A673 (cell line): ENCODE measurements at regions of chr6 and their contacts with region 1.

Region 1: DNA sequence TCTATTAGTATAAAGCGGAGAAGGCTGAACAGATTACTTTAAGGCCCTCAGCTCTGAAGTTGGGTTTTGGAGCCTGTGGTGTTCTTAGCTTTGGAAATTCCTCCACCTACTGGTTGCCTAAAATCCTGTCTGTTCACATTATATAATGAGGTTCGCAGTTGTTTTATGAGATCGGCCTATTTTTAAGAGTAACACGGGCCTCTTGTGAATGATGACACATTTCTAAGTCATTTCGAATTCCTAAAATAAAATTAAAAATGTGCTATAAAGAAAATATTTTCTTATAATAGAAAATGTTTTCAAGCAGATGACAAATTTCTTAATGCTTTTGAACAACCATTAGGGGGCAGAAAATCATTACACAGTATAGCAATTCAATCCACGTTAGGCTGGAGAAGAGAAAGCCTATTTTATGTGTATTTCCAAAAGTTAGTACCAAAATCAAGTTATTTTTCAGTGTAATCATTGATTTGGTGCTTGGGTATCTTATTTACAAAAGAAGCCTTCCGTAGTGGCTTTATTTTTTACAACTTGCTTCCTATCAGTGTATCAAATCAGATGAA is 15.8 kb upstream of the FAM8A1 start:
- DNase-seq: peak; percentile 82
- H3K4me3 ChIP-seq: no peak overlapping the region
- H3K27ac ChIP-seq: no peak overlapping the region
- H3K4me1 ChIP-seq: no peaks in the 10 kb centered on the region
- H3K27me3 ChIP-seq: no peaks in the 10 kb centered on the region
- CTCF ChIP-seq: peak; percentile 98

Region 2: GRCh38 chr6:17281100-17281494 is 303.2 kb before region 1 on chr6 and contains the start of gene RBM24:
- CTCF ChIA-PET with region 1: no interaction called
- POLR2A ChIA-PET with region 1: no interaction called
- intact Hi-C with region 1: loop called (anchors 5 kb)
- DNase-seq: peak; percentile 80
- H3K4me3 ChIP-seq: peak within 1 kb of the TSS; percentile 57
- H3K27ac ChIP-seq: no peak within 1 kb of the TSS
- H3K4me1 ChIP-seq: peaks cover 5% of the 10 kb centered on the region
- H3K27me3 ChIP-seq: peaks cover 6% of the 10 kb centered on the region
- CTCF ChIP-seq: peak; percentile 33; the same call in 1 of the 2 replicates
- total RNA-seq, gene RBM24: 0.24 and 0.55 TPM in 2 replicates

Region 3: DNA sequence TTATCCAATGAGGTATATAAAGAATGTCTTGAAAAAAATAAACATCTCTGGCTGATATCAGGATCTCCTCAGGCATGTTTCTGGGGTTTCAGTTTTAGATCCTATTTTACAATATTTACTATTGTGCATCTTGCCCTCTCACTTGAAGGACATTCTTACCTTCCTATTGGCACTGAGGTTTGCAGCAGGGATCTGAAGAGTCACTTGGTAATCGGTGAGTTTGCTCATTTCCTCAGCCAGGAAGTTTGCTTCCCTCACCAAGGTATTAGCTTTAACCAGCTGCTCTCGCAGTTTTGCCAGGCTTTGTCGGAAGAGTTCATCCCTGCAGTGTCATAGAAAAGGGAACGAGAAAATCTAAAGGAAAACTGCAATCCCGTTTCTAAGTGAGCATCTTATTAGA is 224.3 kb after region 1 on chr6:
- CTCF ChIA-PET with region 1: interaction called, 3 read pairs
- POLR2A ChIA-PET with region 1: no interaction called
- intact Hi-C with region 1: loop called (anchors 2 kb)
- DNase-seq: no peak
- H3K4me3 ChIP-seq: no peak overlapping the region
- H3K27ac ChIP-seq: no peak overlapping the region
- H3K4me1 ChIP-seq: no peaks in the 10 kb centered on the region
- H3K27me3 ChIP-seq: no peaks in the 10 kb centered on the region
- CTCF ChIP-seq: no peak

Region 4: GRCh38 chr6:18122124-18123093 is 538.1 kb after region 1 on chr6 and contains the start of gene NHLRC1:
- CTCF ChIA-PET with region 1: no interaction called
- POLR2A ChIA-PET with region 1: no interaction called
- intact Hi-C with region 1: loop called (anchors 10 kb)
- DNase-seq: peak; percentile 94
- H3K4me3 ChIP-seq: peak within 1 kb of the TSS; percentile 51
- H3K27ac ChIP-seq: peak within 1 kb of the TSS; percentile 64
- H3K4me1 ChIP-seq: peaks cover 11% of the 10 kb centered on the region
- H3K27me3 ChIP-seq: no peaks in the 10 kb centered on the region
- CTCF ChIP-seq: peak; percentile 96
- total RNA-seq, gene NHLRC1: 3.8 and 4.3 TPM in 2 replicates